Right cardiac atrium (tissue), 5 donors: ENCODE measurements at regions of chr5 and their contacts with region 1.

Region 1: DNA sequence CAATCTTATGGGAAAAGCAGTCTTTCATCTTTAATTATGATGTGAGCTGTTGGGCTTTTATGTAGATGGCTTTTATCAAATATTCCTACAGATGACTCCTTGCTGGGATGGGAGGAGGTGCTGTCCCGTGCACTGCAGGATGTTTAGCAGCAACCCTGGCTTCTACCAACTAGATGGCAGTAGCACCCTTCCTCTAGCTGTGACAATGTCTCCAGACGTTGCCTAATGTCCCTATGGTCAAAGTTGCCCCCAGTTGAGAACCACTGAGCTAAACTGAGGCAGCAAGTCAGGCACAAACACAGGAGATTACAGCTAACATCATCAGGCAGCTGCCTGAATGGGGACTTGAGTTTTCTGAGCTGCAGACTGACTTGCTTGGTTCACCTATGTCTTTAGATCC is 401.9 kb upstream of the PDE4D start:
- DNase-seq: no peak
- ATAC-seq: no peak
- H3K4me3 ChIP-seq: no peak overlapping the region
- H3K27ac ChIP-seq: no peak overlapping the region
- H3K4me1 ChIP-seq: no peaks in the 10 kb centered on the region
- H3K27me3 ChIP-seq: no peaks in the 10 kb centered on the region

Region 2: DNA sequence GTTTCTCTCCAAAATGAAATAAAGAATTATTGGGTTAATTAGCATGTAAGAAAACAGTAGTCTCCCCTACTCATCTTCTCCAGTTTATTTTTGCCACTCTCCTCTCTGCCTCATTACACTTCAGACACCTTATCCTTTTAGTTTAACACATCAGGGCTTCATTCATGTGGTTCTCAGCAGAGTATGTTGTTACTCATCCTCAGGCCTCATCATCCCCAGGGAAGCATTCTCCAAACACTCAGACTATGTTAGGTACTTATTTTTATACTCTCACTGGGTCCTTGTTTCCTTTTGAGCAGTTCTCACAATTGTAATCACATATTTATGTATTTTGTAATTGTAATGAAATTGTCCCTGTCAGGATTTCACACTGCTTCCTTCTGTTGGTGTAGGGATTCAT is 872.4 kb before region 1 on chr5:
- intact Hi-C with region 1: no loop called
- DNase-seq: no peak
- ATAC-seq: no peak
- H3K4me3 ChIP-seq: no peak overlapping the region
- H3K27ac ChIP-seq: no peak overlapping the region
- H3K4me1 ChIP-seq: no peaks in the 10 kb centered on the region
- H3K27me3 ChIP-seq: no peaks in the 10 kb centered on the region

Region 3: DNA sequence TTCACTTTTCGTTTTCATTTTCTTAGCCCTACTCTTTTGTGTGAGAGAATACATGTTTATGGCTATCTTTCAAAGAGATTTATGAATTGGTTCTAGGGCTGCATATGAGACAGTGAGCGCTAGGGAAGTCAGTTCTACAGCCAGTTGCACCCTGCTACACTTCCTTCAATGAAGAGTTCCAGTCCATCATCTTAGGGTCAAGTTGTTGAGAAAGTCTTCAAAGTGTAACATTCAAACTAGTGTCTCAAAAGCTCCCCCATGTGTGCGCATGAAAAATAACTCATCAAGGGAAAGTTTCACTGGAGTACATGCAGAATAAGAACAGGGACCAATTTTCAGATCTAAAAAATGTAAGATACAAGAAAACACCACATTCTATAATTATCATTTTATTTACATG is 87.3 kb after region 1 on chr5:
- intact Hi-C with region 1: no loop called
- DNase-seq: no peak
- ATAC-seq: no peak
- H3K4me3 ChIP-seq: no peak overlapping the region
- H3K27ac ChIP-seq: no peak overlapping the region
- H3K4me1 ChIP-seq: no peaks in the 10 kb centered on the region
- H3K27me3 ChIP-seq: no peaks in the 10 kb centered on the region

Region 4: GRCh38 chr5:60586307-60586901 is 291.0 kb after region 1 on chr5:
- intact Hi-C with region 1: loop called in 1 of 4 experiments (anchors 10 kb)
- DNase-seq: no peak
- ATAC-seq: no peak
- H3K4me3 ChIP-seq: no peak overlapping the region
- H3K27ac ChIP-seq: no peak overlapping the region
- H3K4me1 ChIP-seq: no peaks in the 10 kb centered on the region
- H3K27me3 ChIP-seq: no peaks in the 10 kb centered on the region